T-cell (primary cell): ENCODE measurements at regions of chr1 and their contacts with region 1.

Region 1: GRCh38 chr1:147389532-147390524 is 147.3 kb downstream of the CHD1L start:
- DNase-seq: peak in 2 of 35 experiments; percentile 15 to 50
- ATAC-seq: peak in 2 of 4 experiments; percentile 54 to 61
- H3K4me3 ChIP-seq: no peak overlapping the region
- H3K4me3 Mint-ChIP-seq: no peak overlapping the region
- H3K27ac ChIP-seq: no peak overlapping the region
- H3K27ac Mint-ChIP-seq: no peak overlapping the region
- H3K4me1 ChIP-seq: no peaks in the 10 kb centered on the region
- H3K4me1 Mint-ChIP-seq: no peaks in the 10 kb centered on the region
- H3K27me3 ChIP-seq: peaks cover 0 to 13% of the 10 kb centered on the region in 2 experiments
- H3K27me3 Mint-ChIP-seq: peaks cover 15 to 23% of the 10 kb centered on the region in 2 donors

Region 2: GRCh38 chr1:147273409-147274336 is 116.2 kb before region 1 on chr1:
- CTCF ChIA-PET with region 1: interaction called, 4 to 14 read pairs
- POLR2A ChIA-PET with region 1: no interaction called
- DNase-seq: peak in 17 of 35 experiments; percentile 0 to 68 (median 8)
- ATAC-seq: peak in 2 of 4 experiments; percentile 42 to 59
- H3K4me3 ChIP-seq: no peak overlapping the region
- H3K4me3 Mint-ChIP-seq: no peak overlapping the region
- H3K27ac ChIP-seq: no peak overlapping the region
- H3K27ac Mint-ChIP-seq: no peak overlapping the region
- H3K4me1 ChIP-seq: no peaks in the 10 kb centered on the region
- H3K4me1 Mint-ChIP-seq: peaks cover 0 to 6% (median 6%) of the 10 kb centered on the region in 3 donors
- H3K27me3 ChIP-seq: no peaks in the 10 kb centered on the region
- H3K27me3 Mint-ChIP-seq: no peaks in the 10 kb centered on the region

Region 3: DNA sequence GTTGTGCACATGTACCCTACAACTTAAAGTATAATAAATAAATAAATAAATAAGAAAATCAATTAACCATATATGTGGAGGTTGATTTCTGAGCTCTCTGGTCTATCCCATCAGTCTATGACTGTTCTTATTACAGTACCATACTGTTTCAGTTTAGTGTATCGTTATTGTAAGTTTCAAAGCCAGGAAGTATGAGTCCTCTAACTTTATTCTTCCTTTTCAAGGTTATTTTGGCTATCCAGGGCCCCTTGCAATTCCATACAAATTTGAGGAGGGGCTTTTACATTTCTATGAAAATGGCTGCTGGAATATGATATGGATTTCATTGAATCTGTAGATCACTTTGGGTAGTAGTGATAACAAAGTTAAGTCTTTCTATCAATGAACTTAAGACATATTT is 54.6 kb after region 1 on chr1:
- CTCF ChIA-PET with region 1: no interaction called
- POLR2A ChIA-PET with region 1: no interaction called
- DNase-seq: no peak
- ATAC-seq: no peak
- H3K4me3 ChIP-seq: no peak overlapping the region
- H3K4me3 Mint-ChIP-seq: no peak overlapping the region
- H3K27ac ChIP-seq: no peak overlapping the region
- H3K27ac Mint-ChIP-seq: no peak overlapping the region
- H3K4me1 ChIP-seq: no peaks in the 10 kb centered on the region
- H3K4me1 Mint-ChIP-seq: no peaks in the 10 kb centered on the region
- H3K27me3 ChIP-seq: peaks cover 0 to 7% of the 10 kb centered on the region in 2 experiments
- H3K27me3 Mint-ChIP-seq: peaks cover 25 to 31% of the 10 kb centered on the region in 2 donors

Region 4: DNA sequence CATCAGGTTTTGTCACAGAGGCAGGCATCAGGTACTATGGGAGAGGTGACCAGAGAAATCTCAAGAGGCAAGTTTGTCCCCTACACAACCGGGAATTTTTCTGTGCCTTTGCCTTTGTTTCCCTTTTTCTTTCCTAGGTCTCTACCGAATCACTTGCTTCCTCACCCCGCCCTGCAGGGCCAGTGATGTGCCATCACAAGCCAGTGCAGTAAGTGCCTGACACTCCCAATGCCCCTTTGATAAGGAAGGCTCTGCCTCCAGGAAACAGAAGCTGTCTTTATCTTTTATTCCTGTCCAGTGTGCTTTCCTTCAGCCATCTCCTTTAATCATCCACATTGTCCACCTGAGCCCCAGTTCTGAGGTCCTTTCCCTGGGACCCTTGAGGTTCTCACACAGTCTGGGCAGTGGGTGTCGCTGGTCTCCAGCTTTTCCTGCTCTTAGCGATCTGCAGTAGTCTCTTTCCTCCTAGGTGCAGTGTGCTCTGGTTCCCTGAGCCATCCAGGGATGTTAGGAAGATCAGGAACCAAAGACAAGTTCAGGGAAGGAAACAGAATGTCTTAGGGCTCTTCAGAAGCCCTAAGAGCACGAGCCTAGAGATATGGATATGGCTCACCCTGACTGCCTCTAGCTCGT is 334.0 kb after region 1 on chr1:
- CTCF ChIA-PET with region 1: no interaction called
- POLR2A ChIA-PET with region 1: no interaction called
- DNase-seq: peak in 17 of 35 experiments; percentile 4 to 56 (median 16)
- ATAC-seq: peak in 2 of 4 experiments; percentile 39 to 58
- H3K4me3 ChIP-seq: no peak overlapping the region
- H3K4me3 Mint-ChIP-seq: no peak overlapping the region
- H3K27ac ChIP-seq: no peak overlapping the region
- H3K27ac Mint-ChIP-seq: no peak overlapping the region
- H3K4me1 ChIP-seq: no peaks in the 10 kb centered on the region
- H3K4me1 Mint-ChIP-seq: peaks cover 0 to 4% (median 3%) of the 10 kb centered on the region in 3 donors
- H3K27me3 ChIP-seq: peaks cover 0 to 10% of the 10 kb centered on the region in 2 experiments
- H3K27me3 Mint-ChIP-seq: peaks cover 7 to 18% of the 10 kb centered on the region in 2 donors